K562 (cell line): ENCODE measurements at regions of chr21 and their contacts with region 1.

Region 1: DNA sequence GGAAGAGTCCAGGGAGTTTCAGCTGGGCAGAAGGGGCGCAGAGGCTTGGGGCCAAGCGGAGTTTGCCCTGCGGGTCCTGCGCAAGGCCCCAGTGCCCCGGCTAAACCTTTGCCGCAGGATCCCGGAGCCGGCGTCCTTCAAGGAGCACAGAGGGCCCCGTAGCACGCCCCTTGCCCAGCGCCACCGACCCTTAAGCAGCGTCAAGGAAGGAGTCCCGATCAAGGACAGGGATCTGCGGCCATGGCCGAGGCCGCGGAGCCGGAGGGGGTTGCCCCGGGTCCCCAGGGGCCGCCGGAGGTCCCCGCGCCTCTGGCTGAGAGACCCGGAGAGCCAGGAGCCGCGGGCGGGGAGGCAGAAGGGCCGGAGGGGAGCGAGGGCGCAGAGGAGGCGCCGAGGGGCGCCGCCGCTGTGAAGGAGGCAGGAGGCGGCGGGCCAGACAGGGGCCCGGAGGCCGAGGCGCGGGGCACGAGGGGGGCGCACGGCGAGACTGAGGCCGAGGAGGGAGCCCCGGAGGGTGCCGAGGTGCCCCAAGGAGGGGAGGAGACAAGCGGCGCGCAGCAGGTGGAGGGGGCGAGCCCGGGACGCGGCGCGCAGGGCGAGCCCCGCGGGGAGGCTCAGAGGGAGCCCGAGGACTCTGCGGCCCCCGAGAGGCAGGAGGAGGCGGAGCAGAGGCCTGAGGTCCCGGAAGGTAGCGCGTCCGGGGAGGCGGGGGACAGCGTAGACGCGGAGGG is 520 bp downstream of the CLIC6 start:
- DNase-seq: no peak
- ATAC-seq: no peak
- H3K4me3 ChIP-seq: no peak overlapping the region
- H3K27ac ChIP-seq: no peak overlapping the region
- H3K4me1 ChIP-seq: peaks cover 0 to 16% of the 10 kb centered on the region in 2 experiments; a peak in 1 of 5 replicates
- H3K27me3 ChIP-seq: peaks cover 33 to 53% of the 10 kb centered on the region in 2 experiments
- CTCF ChIP-seq: no peak
- EP300 ChIP-seq: no peak
- POLR2A ChIP-seq: no peak
- RAD21 ChIP-seq: no peak

Region 2: DNA sequence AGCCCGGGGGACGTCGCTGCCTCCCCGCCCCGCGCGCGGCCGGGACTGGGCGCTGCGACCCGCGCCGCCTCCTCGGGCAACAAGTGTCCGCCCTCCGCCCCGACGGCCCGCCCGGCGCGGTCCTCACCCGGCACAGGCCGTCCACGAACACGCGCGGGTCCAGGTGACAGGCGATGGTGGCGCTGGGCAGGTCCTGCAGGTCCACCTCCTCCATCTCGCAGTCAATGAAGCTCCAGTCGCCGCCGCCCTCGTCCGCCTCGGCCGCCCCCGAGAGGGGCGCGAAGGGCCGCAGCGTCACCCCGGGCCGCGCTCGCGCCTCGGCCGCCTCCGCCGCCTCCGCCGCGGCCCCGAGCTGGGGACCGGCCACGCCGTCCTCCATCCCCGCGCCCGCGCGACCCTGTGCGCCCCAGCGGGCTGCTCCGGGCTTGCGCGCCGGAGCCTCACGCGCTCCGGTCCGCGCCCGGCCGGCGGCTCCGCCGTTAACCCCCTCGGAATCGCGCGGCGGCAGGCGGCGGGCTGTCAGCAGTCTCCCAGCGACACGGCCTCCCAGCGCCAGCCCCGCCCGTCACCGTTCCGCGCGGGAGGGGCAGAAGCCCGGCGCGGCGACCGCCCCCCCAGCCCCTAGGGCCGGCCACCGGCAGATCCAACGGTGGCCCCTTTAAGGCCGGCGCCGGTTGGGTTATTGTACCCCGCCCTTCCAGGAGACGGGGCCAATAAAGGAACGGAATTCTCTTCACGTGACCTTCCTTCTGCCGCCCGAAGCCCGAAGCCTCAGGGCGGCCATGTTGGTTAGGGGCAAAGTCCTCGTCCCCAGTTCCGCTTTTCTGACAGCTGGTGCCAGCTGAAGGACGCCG is 54.5 kb before region 1 on chr21 and contains the start of gene RCAN1:
- CTCF ChIA-PET with region 1: no interaction called
- POLR2A ChIA-PET with region 1: interaction called, 3 read pairs
- in situ Hi-C with region 1: no loop called
- intact Hi-C with region 1: loop called (anchors 5 kb)
- DNase-seq: peak; percentile 96 to 97 (median 96)
- ATAC-seq: peak; percentile 99
- H3K4me3 ChIP-seq: peak within 1 kb of the TSS; percentile 59
- H3K27ac ChIP-seq: peak within 1 kb of the TSS; percentile 53; the same call in 2 of the 3 replicates
- H3K4me1 ChIP-seq: peaks cover 13 to 23% of the 10 kb centered on the region in 2 experiments
- H3K27me3 ChIP-seq: peaks cover 0 to 11% of the 10 kb centered on the region in 2 experiments; a peak in 4 of 5 replicates
- CTCF ChIP-seq: no peak
- EP300 ChIP-seq: no peak
- POLR2A ChIP-seq: no peak
- RAD21 ChIP-seq: no peak
- polyA plus RNA-seq, gene RCAN1: 4.4 to 6.1 TPM